Activated B cell treated with CpG ODN at 0.5 μM for 24 hours (primary cell): ENCODE measurements at regions of chr2 and their contacts with region 1.

Region 1: DNA sequence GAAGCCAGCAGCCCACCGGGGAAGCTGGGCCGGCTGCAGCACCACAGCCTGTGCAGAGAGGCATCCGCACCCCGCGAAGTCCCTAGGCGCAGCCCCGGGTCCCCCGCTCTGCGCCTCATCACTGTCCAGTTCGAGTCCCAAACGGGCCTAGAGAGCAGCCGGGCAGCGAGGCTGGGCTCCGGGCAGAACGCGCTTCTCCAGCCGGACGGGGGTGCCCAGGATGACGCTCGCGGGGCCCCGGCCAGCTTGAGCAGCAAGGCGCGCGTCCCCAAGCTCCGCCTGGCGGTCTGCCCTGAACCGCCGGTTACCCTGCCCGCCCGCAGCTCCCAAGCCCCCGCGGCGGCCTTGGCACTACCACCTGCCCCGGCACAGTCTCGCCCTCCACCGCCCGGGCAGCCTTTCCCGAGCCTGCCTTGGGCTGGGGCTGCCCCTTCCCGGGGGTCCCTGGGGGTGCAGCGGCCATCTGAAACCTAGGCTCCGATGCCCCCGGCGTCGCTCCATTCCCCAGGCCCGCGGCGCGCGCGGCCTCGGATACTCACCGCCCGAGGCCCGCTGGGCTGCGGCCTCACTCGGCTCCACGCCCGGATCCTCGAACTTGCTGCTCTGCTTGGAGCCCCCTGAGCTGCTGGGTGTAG is 591 bp downstream of the SLC16A14 start:
- DNase-seq: peak; percentile 58
- ATAC-seq: peak; percentile 32
- H3K4me3 Mint-ChIP-seq: peak overlapping the region; percentile 90
- H3K27ac Mint-ChIP-seq: peak overlapping the region; percentile 70
- H3K4me1 Mint-ChIP-seq: peaks cover 18% of the 10 kb centered on the region
- H3K27me3 Mint-ChIP-seq: peaks cover 5% of the 10 kb centered on the region
- CTCF ChIP-seq: no peak

Region 2: DNA sequence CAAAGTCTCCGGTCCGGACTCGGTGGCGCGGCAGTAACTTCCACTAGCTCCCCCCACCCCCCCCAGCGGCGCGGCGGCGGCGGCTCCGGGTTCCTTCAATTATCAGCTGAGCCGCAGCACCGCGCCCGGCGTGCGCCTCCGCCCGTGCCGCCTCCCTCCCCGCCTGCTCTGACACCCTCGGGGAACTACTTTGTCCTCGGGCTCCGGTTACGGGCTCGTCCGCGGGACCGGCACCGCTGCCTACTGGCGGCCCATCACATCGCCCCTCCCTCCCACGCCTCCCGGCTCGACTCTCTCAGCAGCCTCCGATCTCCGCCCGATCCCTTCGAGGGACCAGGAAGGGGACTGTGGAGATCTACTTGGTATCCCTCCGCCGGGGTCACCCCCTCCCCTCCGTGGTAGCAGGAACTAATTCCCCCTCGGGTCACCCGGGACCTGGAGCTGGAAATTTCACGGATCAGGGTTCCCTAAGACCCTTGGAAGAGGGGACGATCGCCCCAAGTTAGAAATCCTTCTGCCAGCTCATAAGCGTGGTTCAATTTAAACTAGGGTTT is 146.2 kb before region 1 on chr2 and contains the start of gene TRIP12:
- CTCF ChIA-PET with region 1: interaction called, 4 read pairs
- POLR2A ChIA-PET with region 1: interaction called, 3 read pairs
- intact Hi-C with region 1: loop called (anchors 2 kb)
- DNase-seq: peak; percentile 94
- ATAC-seq: peak; percentile 76
- H3K4me3 Mint-ChIP-seq: peak within 1 kb of the TSS; percentile 94
- H3K27ac Mint-ChIP-seq: peak within 1 kb of the TSS; percentile 96
- H3K4me1 Mint-ChIP-seq: peaks cover 42% of the 10 kb centered on the region
- H3K27me3 Mint-ChIP-seq: no peaks in the 10 kb centered on the region
- CTCF ChIP-seq: no peak
- total RNA-seq, gene TRIP12: 255 and 272 TPM in 2 replicates

Region 3: DNA sequence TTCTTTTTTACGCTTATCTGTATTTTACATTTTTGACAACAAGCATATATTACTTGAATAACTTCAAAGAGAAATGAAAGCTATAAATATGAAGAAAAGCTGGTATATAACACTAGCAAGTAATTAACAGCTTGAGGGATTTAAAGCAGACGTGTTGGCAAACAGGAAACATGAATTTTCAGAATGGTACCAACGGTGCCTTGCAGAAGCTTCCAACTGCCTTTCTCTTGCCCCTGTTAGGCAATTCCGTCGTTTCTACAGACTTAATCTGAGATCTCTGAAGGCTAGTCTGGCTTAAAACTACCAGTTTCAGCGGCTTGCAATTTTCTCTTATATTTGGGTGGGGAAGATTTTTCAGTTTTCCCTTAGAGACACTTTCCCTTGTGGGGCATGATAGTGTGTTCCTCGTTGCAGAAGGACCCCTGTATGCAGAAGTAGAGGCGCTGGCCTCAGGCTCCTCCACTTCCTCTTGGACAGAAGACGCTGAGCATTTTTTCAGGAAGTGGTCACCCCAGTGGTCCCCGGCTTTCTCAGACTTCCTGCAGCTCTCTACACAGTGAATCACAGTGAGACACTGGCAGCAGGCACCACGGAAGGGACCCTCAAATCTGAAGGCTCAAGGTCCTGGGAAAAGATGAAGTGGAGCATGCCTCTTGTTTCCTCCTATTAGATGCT is 56.8 kb after region 1 on chr2:
- CTCF ChIA-PET with region 1: no interaction called
- POLR2A ChIA-PET with region 1: no interaction called
- intact Hi-C with region 1: loop called (anchors 2 kb)
- DNase-seq: no peak
- ATAC-seq: peak; percentile 34
- H3K4me3 Mint-ChIP-seq: peak overlapping the region; percentile 25
- H3K27ac Mint-ChIP-seq: no peak overlapping the region
- H3K4me1 Mint-ChIP-seq: peaks cover 17% of the 10 kb centered on the region
- H3K27me3 Mint-ChIP-seq: no peaks in the 10 kb centered on the region
- CTCF ChIP-seq: no peak

Region 4: DNA sequence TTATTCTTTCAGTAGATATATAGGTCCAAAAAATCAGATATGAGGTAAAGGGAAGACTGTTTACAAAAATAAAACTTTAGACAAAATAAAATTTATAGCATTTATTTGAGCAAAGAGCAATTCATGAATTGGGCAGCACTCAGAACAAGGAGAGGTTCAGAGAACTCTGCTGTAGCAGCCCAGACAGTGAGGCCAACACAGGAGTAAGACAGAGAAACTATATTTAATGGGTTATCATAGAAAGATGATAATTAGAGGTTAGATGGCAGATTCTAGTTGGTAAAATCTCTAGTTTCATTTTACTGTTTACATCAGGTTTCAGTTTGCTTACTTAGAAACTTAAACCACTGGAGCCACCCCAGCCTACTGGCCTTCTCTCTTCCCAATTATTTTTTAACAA is 228.8 kb after region 1 on chr2:
- CTCF ChIA-PET with region 1: no interaction called
- POLR2A ChIA-PET with region 1: interaction called, 3 read pairs
- intact Hi-C with region 1: loop called (anchors 10 kb)
- DNase-seq: no peak
- ATAC-seq: no peak
- H3K4me3 Mint-ChIP-seq: no peak overlapping the region
- H3K27ac Mint-ChIP-seq: no peak overlapping the region
- H3K4me1 Mint-ChIP-seq: peaks cover 5% of the 10 kb centered on the region
- H3K27me3 Mint-ChIP-seq: no peaks in the 10 kb centered on the region
- CTCF ChIP-seq: no peak

Region 5: DNA sequence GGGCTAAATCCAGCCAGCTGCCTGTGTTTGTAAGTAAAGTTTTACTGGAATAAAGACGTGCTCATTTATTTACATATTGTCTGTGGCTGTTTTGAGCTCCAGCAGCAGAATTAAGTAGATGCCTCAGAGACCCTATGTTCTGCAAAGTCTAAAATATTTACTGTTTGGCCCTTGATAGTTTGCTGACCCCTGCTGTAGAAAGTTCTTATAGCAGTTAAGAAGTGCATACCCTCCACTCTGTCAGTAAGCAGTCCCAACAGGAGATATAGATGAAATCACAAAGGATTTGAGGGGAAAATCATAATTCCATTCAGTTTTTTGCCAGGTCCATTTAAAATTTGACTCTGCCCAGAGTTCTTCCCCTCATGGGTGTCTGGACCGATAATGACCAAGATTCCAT is 746.5 kb after region 1 on chr2:
- CTCF ChIA-PET with region 1: no interaction called
- POLR2A ChIA-PET with region 1: no interaction called
- intact Hi-C with region 1: loop called (anchors 5 kb)
- DNase-seq: no peak
- ATAC-seq: no peak
- H3K4me3 Mint-ChIP-seq: no peak overlapping the region
- H3K27ac Mint-ChIP-seq: no peak overlapping the region
- H3K4me1 Mint-ChIP-seq: no peaks in the 10 kb centered on the region
- H3K27me3 Mint-ChIP-seq: no peaks in the 10 kb centered on the region
- CTCF ChIP-seq: no peak